Caco-2 (cell line): ENCODE measurements at regions of chr10 and their contacts with region 1.

Region 1: GRCh38 chr10:81820420-81820819 is 54.6 kb upstream of the NRG3 start:
- DNase-seq: peak in 1 of 2 experiments; percentile 14
- H3K4me3 ChIP-seq: no peak overlapping the region
- H3K4me3 Mint-ChIP-seq: no peak overlapping the region
- H3K27ac Mint-ChIP-seq: no peak overlapping the region
- H3K4me1 ChIP-seq: no peaks in the 10 kb centered on the region
- H3K4me1 Mint-ChIP-seq: no peaks in the 10 kb centered on the region
- H3K27me3 ChIP-seq: no peaks in the 10 kb centered on the region
- H3K27me3 Mint-ChIP-seq: no peaks in the 10 kb centered on the region
- CTCF ChIP-seq: peak; percentile 28 to 50

Region 2: DNA sequence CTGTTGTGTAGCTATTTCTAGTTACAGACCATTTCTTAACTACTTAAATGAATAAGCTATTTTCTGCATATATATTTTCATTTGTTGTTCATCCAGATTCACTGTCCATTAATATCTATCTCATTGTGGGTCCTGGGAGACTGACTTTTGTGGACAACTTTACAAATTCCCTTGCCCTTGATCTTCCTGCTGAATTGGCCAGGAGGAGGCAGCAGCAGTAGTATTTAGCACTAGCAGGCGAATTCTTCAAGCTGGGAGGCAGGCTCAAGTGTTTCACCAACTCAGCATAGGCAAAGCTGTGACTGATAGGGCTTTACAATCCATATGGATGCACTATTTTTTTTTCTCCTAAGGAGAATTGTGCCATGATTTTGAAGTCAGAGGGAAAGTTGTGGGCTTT is 406.4 kb before region 1 on chr10:
- CTCF ChIA-PET with region 1: interaction called, 8 read pairs
- POLR2A ChIA-PET with region 1: no interaction called
- intact Hi-C with region 1: loop called (anchors 1 kb)
- DNase-seq: peak; percentile 27 to 35
- H3K4me3 ChIP-seq: no peak overlapping the region
- H3K4me3 Mint-ChIP-seq: no peak overlapping the region
- H3K27ac Mint-ChIP-seq: no peak overlapping the region
- H3K4me1 ChIP-seq: no peaks in the 10 kb centered on the region
- H3K4me1 Mint-ChIP-seq: no peaks in the 10 kb centered on the region
- H3K27me3 ChIP-seq: no peaks in the 10 kb centered on the region
- H3K27me3 Mint-ChIP-seq: no peaks in the 10 kb centered on the region
- CTCF ChIP-seq: peak in 1 of 2 experiments; percentile 55

Region 3: GRCh38 chr10:81680374-81680773 is 140.0 kb before region 1 on chr10:
- CTCF ChIA-PET with region 1: no interaction called
- POLR2A ChIA-PET with region 1: no interaction called
- intact Hi-C with region 1: loop called (anchors 1 kb)
- DNase-seq: no peak
- H3K4me3 ChIP-seq: no peak overlapping the region
- H3K4me3 Mint-ChIP-seq: no peak overlapping the region
- H3K27ac Mint-ChIP-seq: no peak overlapping the region
- H3K4me1 ChIP-seq: no peaks in the 10 kb centered on the region
- H3K4me1 Mint-ChIP-seq: no peaks in the 10 kb centered on the region
- H3K27me3 ChIP-seq: no peaks in the 10 kb centered on the region
- H3K27me3 Mint-ChIP-seq: no peaks in the 10 kb centered on the region
- CTCF ChIP-seq: no peak

Region 4: GRCh38 chr10:81784111-81784597 is 36.3 kb before region 1 on chr10:
- CTCF ChIA-PET with region 1: no interaction called
- POLR2A ChIA-PET with region 1: no interaction called
- intact Hi-C with region 1: no loop called
- DNase-seq: no peak
- H3K4me3 ChIP-seq: no peak overlapping the region
- H3K4me3 Mint-ChIP-seq: no peak overlapping the region
- H3K27ac Mint-ChIP-seq: no peak overlapping the region
- H3K4me1 ChIP-seq: no peaks in the 10 kb centered on the region
- H3K4me1 Mint-ChIP-seq: no peaks in the 10 kb centered on the region
- H3K27me3 ChIP-seq: no peaks in the 10 kb centered on the region
- H3K27me3 Mint-ChIP-seq: peaks cover 5% of the 10 kb centered on the region
- CTCF ChIP-seq: no peak